ENCODE measurements at regions of chr2 and their contacts with region 1.

Region 1: DNA sequence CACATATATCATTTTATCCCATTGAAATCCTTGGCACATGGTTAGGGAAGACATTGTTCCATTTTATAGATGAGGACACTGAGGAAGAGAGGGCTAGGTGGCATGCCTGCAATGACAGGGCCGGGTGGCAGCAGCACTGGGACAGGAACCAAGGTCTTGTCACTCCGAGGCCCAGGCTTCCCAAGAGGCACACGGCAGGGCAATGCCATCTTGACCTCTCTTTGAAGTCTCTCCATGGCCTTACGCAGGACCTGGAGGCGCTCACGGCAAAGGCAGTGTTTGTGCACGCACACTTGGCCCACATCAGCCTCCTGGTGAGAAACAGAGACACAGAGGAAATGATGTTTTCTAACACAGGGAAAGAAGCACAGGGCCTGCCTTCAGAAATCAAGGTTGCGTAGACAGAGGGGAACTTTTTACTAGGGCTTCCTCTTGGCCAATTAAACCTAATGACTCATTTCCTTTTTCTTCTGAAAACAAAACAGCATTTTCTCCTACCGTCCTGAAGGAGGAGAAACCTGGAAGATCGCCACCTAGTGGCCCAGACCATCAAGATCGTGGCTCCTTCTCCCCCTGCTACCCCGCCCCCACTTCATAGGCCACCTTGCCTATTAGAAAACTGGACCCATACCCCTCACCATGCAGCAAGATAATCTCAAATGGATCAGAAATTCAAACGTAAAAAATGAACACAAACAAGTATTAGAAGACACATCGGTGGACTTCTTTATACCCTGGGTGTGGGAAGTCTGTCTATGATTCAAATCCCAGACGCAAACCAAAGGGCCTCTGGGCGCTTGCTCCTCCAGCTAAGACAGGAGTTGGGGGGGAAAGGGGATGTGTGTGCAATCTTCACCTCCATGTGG is 74.6 kb upstream of the SP3 start:
- DNase-seq: peak; percentile 93
- ATAC-seq: peak; percentile 90
- H3K4me3 ChIP-seq: peak overlapping the region in 4 of 5 experiments; percentile 7 to 34 (median 19)
- H3K4me3 Mint-ChIP-seq: peak overlapping the region; percentile 72
- H3K27ac ChIP-seq: peak overlapping the region; percentile 87 to 94
- H3K27ac Mint-ChIP-seq: peak overlapping the region; percentile 96
- H3K4me1 ChIP-seq: peaks cover 11 to 23% of the 10 kb centered on the region in 2 donors
- H3K4me1 Mint-ChIP-seq: peaks cover 24% of the 10 kb centered on the region
- H3K27me3 ChIP-seq: peaks cover 0 to 5% (median 2%) of the 10 kb centered on the region in 4 experiments
- H3K27me3 Mint-ChIP-seq: no peaks in the 10 kb centered on the region
- CTCF ChIP-seq: peak; percentile 84

Region 2: DNA sequence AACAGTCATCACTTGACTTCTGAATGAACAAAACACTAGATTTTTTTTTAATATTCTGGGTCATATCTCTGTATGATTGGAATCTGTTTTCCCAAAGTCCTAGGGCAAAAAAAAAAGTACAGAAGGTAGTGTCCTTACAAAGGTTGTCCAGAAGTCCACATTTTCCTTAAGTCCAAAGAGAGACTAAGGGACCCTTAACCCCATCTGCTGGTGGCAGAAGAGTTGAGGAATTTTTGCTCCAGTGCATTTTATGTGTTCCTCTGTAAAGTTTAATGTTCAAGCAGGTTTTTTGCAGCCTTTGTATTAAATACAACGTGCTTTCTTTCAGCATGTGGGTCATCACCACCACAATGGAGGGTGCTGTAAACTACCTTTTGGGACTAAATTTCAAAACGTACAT is 290.5 kb before region 1 on chr2:
- CTCF ChIA-PET with region 1: no interaction called
- POLR2A ChIA-PET with region 1: no interaction called
- intact Hi-C with region 1: no loop called
- DNase-seq: no peak
- ATAC-seq: no peak
- H3K4me3 ChIP-seq: no peak overlapping the region
- H3K4me3 Mint-ChIP-seq: no peak overlapping the region
- H3K27ac ChIP-seq: no peak overlapping the region
- H3K27ac Mint-ChIP-seq: no peak overlapping the region
- H3K4me1 ChIP-seq: no peaks in the 10 kb centered on the region
- H3K4me1 Mint-ChIP-seq: no peaks in the 10 kb centered on the region
- H3K27me3 ChIP-seq: peaks cover 0 to 6% (median 2%) of the 10 kb centered on the region in 4 experiments
- H3K27me3 Mint-ChIP-seq: peaks cover 23% of the 10 kb centered on the region
- CTCF ChIP-seq: no peak

Region 3: GRCh38 chr2:173874894-173875237 is 164.9 kb before region 1 on chr2:
- CTCF ChIA-PET with region 1: no interaction called
- POLR2A ChIA-PET with region 1: no interaction called
- intact Hi-C with region 1: loop called (anchors 2 kb)
- DNase-seq: peak; percentile 85
- ATAC-seq: peak; percentile 99
- H3K4me3 ChIP-seq: peak overlapping the region in 1 of 5 experiments; percentile 3
- H3K4me3 Mint-ChIP-seq: peak overlapping the region; percentile 89
- H3K27ac ChIP-seq: no peak overlapping the region
- H3K27ac Mint-ChIP-seq: peak overlapping the region; percentile 50
- H3K4me1 ChIP-seq: peaks cover 29 to 32% of the 10 kb centered on the region in 2 donors
- H3K4me1 Mint-ChIP-seq: peaks cover 31% of the 10 kb centered on the region
- H3K27me3 ChIP-seq: peaks cover 0 to 5% (median 1%) of the 10 kb centered on the region in 4 experiments
- H3K27me3 Mint-ChIP-seq: peaks cover 23% of the 10 kb centered on the region
- CTCF ChIP-seq: no peak

Region 4: DNA sequence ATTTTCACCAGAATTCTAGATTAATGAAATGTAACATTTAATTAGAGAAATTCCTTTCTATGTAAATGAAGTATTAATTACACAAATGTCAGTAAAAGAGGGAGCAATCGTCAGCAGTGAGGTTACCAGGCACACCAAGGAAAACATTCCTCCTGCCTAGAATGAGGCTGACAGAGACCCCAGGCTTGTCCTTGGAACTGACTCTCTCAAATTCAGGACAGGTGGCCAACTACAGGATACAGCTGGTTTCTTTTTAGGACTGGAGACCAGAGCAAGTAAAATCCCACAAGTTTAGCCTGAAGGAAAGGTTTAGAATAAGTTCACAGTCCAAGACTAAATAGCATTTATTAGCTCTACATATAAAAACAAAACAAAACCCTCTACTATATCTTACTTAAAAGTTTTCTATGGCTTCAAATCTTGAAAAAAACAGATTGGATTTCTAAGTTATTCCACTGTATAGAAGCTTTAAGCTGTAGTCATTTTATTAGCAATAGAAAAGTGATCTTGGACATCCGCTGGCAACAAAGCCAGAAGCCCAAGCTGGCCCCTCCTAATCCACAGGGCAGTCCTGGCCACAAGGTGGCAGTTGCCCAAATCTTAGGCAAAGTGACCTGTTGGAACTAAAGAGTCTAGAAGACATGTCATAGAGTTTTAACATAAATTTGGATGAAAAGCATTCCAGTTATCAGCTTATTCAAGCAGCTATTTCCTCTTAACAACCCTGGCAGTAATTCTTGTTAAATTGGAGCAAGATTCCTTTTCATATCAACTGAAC is 155.6 kb before region 1 on chr2:
- CTCF ChIA-PET with region 1: interaction called, 9 read pairs
- POLR2A ChIA-PET with region 1: no interaction called
- intact Hi-C with region 1: loop called (anchors 1 kb)
- DNase-seq: peak; percentile 36
- ATAC-seq: peak; percentile 57
- H3K4me3 ChIP-seq: no peak overlapping the region
- H3K4me3 Mint-ChIP-seq: no peak overlapping the region
- H3K27ac ChIP-seq: no peak overlapping the region
- H3K27ac Mint-ChIP-seq: no peak overlapping the region
- H3K4me1 ChIP-seq: no peaks in the 10 kb centered on the region
- H3K4me1 Mint-ChIP-seq: no peaks in the 10 kb centered on the region
- H3K27me3 ChIP-seq: peaks cover 0 to 4% (median 0%) of the 10 kb centered on the region in 4 experiments
- H3K27me3 Mint-ChIP-seq: peaks cover 18% of the 10 kb centered on the region
- CTCF ChIP-seq: peak; percentile 28

Region 5: DNA sequence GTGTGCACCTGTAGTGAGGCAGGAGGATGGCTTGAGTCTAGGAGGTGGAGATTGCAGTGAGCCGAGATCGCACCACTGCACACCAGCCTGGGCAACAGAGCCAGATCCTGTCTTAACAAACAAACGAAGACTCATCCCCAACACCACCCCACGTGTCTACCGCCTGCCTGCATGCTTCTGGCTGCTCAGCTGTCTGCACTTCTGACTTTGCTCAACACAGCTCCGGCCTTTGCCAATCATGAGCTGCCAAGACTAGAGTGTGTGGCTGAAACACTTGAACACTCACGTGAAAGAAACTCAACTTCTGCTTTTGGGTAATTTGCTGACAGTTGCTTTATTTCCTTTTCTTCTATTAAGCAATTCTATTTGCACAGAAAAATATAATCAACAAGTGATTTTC is 42.5 kb before region 1 on chr2:
- CTCF ChIA-PET with region 1: interaction called, 7 read pairs
- POLR2A ChIA-PET with region 1: no interaction called
- intact Hi-C with region 1: loop called (anchors 2 kb)
- DNase-seq: peak; percentile 86
- ATAC-seq: peak; percentile 100
- H3K4me3 ChIP-seq: no peak overlapping the region
- H3K4me3 Mint-ChIP-seq: peak overlapping the region; percentile 30
- H3K27ac ChIP-seq: peak overlapping the region; percentile 25 to 58
- H3K27ac Mint-ChIP-seq: peak overlapping the region; percentile 84
- H3K4me1 ChIP-seq: peaks cover 21 to 22% of the 10 kb centered on the region in 2 donors
- H3K4me1 Mint-ChIP-seq: peaks cover 30% of the 10 kb centered on the region
- H3K27me3 ChIP-seq: no peaks in the 10 kb centered on the region
- H3K27me3 Mint-ChIP-seq: no peaks in the 10 kb centered on the region
- CTCF ChIP-seq: no peak

Region 6: GRCh38 chr2:175383286-175383685 is 1343.5 kb after region 1 on chr2:
- CTCF ChIA-PET with region 1: no interaction called
- POLR2A ChIA-PET with region 1: no interaction called
- intact Hi-C with region 1: no loop called
- DNase-seq: no peak
- ATAC-seq: no peak
- H3K4me3 ChIP-seq: no peak overlapping the region
- H3K4me3 Mint-ChIP-seq: no peak overlapping the region
- H3K27ac ChIP-seq: no peak overlapping the region
- H3K27ac Mint-ChIP-seq: no peak overlapping the region
- H3K4me1 ChIP-seq: no peaks in the 10 kb centered on the region
- H3K4me1 Mint-ChIP-seq: no peaks in the 10 kb centered on the region
- H3K27me3 ChIP-seq: no peaks in the 10 kb centered on the region
- H3K27me3 Mint-ChIP-seq: peaks cover 4% of the 10 kb centered on the region
- CTCF ChIP-seq: no peak